OCI-LY7 (cell line): ENCODE measurements at regions of chr12 and their contacts with region 1.

Region 1: GRCh38 chr12:64890873-64891468 is 66.5 kb downstream of the TBC1D30 start:
- DNase-seq: peak; percentile 68
- H3K4me3 ChIP-seq: no peak overlapping the region
- H3K27ac ChIP-seq: no peak overlapping the region
- H3K4me1 ChIP-seq: no peaks in the 10 kb centered on the region
- CTCF ChIP-seq: peak; percentile 92

Region 2: GRCh38 chr12:64625243-64626077 is 265.5 kb before region 1 on chr12:
- CTCF ChIA-PET with region 1: no interaction called
- POLR2A ChIA-PET with region 1: no interaction called
- intact Hi-C with region 1: no loop called
- DNase-seq: peak; percentile 54
- H3K4me3 ChIP-seq: peak overlapping the region; percentile 64
- H3K27ac ChIP-seq: peak overlapping the region; percentile 60
- H3K4me1 ChIP-seq: peaks cover 49% of the 10 kb centered on the region
- CTCF ChIP-seq: no peak

Region 3: GRCh38 chr12:64781280-64782190 is 109.4 kb before region 1 on chr12:
- CTCF ChIA-PET with region 1: no interaction called
- POLR2A ChIA-PET with region 1: no interaction called
- intact Hi-C with region 1: no loop called
- DNase-seq: no peak
- H3K4me3 ChIP-seq: no peak overlapping the region
- H3K27ac ChIP-seq: no peak overlapping the region
- H3K4me1 ChIP-seq: peaks cover 7% of the 10 kb centered on the region
- CTCF ChIP-seq: no peak

Region 4: DNA sequence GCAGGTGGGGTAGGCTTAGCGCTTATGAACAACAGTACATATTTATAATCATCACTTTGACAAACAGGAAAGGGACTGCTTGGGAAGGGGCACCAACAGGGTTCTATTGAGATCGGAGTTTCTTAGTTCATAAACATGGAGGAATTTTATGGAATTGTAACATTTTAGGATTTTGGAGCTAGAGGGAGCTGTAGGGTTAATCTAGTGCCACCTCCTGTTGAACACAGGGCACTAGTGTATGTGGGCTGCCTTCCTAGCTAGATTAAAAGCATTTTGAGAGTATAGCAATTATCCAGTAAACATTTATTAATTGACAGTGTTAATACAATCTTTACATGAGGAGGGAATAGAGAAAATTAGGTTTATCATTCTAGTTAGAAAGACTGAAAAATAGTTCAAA is 89.6 kb before region 1 on chr12:
- CTCF ChIA-PET with region 1: no interaction called
- POLR2A ChIA-PET with region 1: no interaction called
- intact Hi-C with region 1: loop called (anchors 5 kb)
- DNase-seq: no peak
- H3K4me3 ChIP-seq: no peak overlapping the region
- H3K27ac ChIP-seq: no peak overlapping the region
- H3K4me1 ChIP-seq: no peaks in the 10 kb centered on the region
- CTCF ChIP-seq: peak; percentile 39; the same call in 1 of the 2 replicates

Region 5: GRCh38 chr12:65039306-65039705 is 148.3 kb after region 1 on chr12:
- CTCF ChIA-PET with region 1: no interaction called
- POLR2A ChIA-PET with region 1: no interaction called
- intact Hi-C with region 1: no loop called
- DNase-seq: no peak
- H3K4me3 ChIP-seq: no peak overlapping the region
- H3K27ac ChIP-seq: no peak overlapping the region
- H3K4me1 ChIP-seq: no peaks in the 10 kb centered on the region
- CTCF ChIP-seq: no peak

Region 6: DNA sequence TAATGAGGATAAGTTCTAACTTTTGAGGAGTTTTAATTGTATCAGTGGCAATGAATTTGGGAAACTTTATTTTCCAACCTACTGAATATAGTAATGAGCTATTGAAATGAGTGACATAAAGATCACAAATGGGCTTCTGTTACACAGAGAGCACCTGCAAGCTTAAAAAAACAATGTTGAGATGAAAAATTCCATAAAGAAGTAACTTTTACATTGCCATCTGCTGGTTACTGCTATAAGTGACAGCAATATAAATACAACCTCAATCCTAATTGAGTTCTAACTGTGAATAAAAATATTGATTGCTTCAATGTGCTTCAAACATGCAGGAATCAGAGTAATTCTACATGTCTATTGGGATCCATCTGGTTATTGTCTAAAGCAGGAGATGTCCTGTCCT is 216.0 kb after region 1 on chr12:
- CTCF ChIA-PET with region 1: no interaction called
- POLR2A ChIA-PET with region 1: no interaction called
- intact Hi-C with region 1: loop called (anchors 2 kb)
- DNase-seq: peak; percentile 6
- H3K4me3 ChIP-seq: no peak overlapping the region
- H3K27ac ChIP-seq: no peak overlapping the region
- H3K4me1 ChIP-seq: no peaks in the 10 kb centered on the region
- CTCF ChIP-seq: peak; percentile 67

Region 7: GRCh38 chr12:65121049-65121955 is 230.3 kb after region 1 on chr12 and contains the start of gene WIF1:
- CTCF ChIA-PET with region 1: no interaction called
- POLR2A ChIA-PET with region 1: no interaction called
- intact Hi-C with region 1: loop called (anchors 2 kb)
- DNase-seq: no peak
- H3K4me3 ChIP-seq: no peak within 1 kb of the TSS
- H3K27ac ChIP-seq: no peak within 1 kb of the TSS
- H3K4me1 ChIP-seq: no peaks in the 10 kb centered on the region
- CTCF ChIP-seq: peak; percentile 64
- total RNA-seq, gene WIF1: not detected in 2 replicates

Region 8: DNA sequence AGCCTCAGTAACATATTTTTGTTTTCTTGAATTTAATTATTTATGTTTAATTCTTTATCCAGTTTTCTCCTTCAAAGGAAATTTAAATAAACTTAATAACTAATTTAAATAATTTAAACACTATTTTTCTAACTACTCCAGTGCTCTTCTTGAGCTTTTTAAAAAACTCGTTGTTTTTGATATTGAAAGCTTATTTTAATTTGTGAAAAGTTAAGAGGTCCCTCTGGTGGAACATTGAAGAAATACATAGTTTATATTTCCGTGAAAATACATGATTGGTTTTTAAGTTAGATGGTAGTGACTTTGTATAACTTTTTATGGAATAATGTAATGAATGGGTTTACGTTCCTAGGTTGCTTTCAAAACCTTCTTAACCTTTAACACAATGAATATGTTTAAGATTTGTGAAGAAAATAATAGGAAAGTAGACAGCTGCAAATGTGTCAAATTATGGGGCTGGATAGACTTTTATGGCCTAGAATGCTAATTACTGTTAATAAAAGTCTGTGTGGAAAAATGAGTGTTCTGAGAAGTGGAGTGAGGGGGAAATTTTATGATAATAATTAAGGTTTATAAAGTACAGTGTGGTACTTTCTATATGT is 341.6 kb after region 1 on chr12:
- CTCF ChIA-PET with region 1: no interaction called
- POLR2A ChIA-PET with region 1: no interaction called
- intact Hi-C with region 1: loop called (anchors 5 kb)
- DNase-seq: peak; percentile 52
- H3K4me3 ChIP-seq: no peak overlapping the region
- H3K27ac ChIP-seq: no peak overlapping the region
- H3K4me1 ChIP-seq: no peaks in the 10 kb centered on the region
- CTCF ChIP-seq: peak; percentile 85

Region 9: GRCh38 chr12:65279369-65280112 is 388.6 kb after region 1 on chr12:
- CTCF ChIA-PET with region 1: no interaction called
- POLR2A ChIA-PET with region 1: no interaction called
- intact Hi-C with region 1: loop called (anchors 10 kb)
- DNase-seq: no peak
- H3K4me3 ChIP-seq: no peak overlapping the region
- H3K27ac ChIP-seq: no peak overlapping the region
- H3K4me1 ChIP-seq: no peaks in the 10 kb centered on the region
- CTCF ChIP-seq: no peak

Region 10: GRCh38 chr12:65556681-65557437 is 665.9 kb after region 1 on chr12:
- CTCF ChIA-PET with region 1: no interaction called
- POLR2A ChIA-PET with region 1: no interaction called
- intact Hi-C with region 1: no loop called
- DNase-seq: peak; percentile 53
- H3K4me3 ChIP-seq: no peak overlapping the region
- H3K27ac ChIP-seq: no peak overlapping the region
- H3K4me1 ChIP-seq: no peaks in the 10 kb centered on the region
- CTCF ChIP-seq: peak; percentile 83

Region 11: DNA sequence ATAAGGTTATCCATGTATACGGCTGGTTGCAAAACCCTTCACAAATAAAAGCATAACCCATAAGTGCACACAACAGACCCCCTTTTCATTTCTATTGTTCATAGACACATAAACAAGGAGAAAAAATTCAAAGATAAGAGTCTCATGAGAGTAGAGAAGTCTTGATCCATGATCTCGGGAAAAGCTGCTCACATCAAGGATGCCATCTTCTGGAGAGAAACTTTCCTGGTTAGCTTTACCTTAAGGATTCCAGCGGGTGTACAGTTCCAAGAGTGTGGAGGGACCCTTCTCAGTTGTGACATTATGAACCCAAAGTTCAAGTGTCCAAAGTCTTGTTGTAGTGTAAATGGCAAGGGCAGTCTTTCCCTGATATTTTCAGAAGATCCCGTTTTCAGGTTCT is 1095.1 kb after region 1 on chr12:
- CTCF ChIA-PET with region 1: no interaction called
- POLR2A ChIA-PET with region 1: interaction called, 5 read pairs
- intact Hi-C with region 1: loop called (anchors 2 kb)
- DNase-seq: no peak
- H3K4me3 ChIP-seq: no peak overlapping the region
- H3K27ac ChIP-seq: no peak overlapping the region
- H3K4me1 ChIP-seq: no peaks in the 10 kb centered on the region
- CTCF ChIP-seq: no peak